ENCODE measurements at regions of chr9 and their contacts with region 1.

Region 1: GRCh38 chr9:125407974-125408900 is 146.6 kb downstream of the GAPVD1 start:
- DNase-seq: peak; percentile 82 to 95
- ATAC-seq: peak; percentile 87
- H3K4me3 ChIP-seq: peak overlapping the region in 1 of 2 donors; percentile 19
- H3K27ac ChIP-seq: no peak overlapping the region
- H3K4me1 ChIP-seq: no peaks in the 10 kb centered on the region
- H3K27me3 ChIP-seq: no peaks in the 10 kb centered on the region

Region 2: GRCh38 chr9:125631391-125632085 is 223.3 kb after region 1 on chr9:
- intact Hi-C with region 1: loop called (anchors 2 to 5 kb)
- DNase-seq: no peak
- ATAC-seq: no peak
- H3K4me3 ChIP-seq: no peak overlapping the region
- H3K27ac ChIP-seq: no peak overlapping the region
- H3K4me1 ChIP-seq: peaks cover 5 to 6% of the 10 kb centered on the region in 2 donors
- H3K27me3 ChIP-seq: no peaks in the 10 kb centered on the region

Region 3: GRCh38 chr9:126228781-126229444 is 820.7 kb after region 1 on chr9:
- intact Hi-C with region 1: loop called (anchors 2 to 5 kb)
- DNase-seq: peak; percentile 73 to 87
- ATAC-seq: peak; percentile 80
- H3K4me3 ChIP-seq: no peak overlapping the region
- H3K27ac ChIP-seq: no peak overlapping the region
- H3K4me1 ChIP-seq: no peaks in the 10 kb centered on the region
- H3K27me3 ChIP-seq: no peaks in the 10 kb centered on the region

Measured in aorta (tissue), 5 donors.